Mammary epithelial cell (primary cell): ENCODE measurements at regions of chr20 and their contacts with region 1.

Region 1: GRCh38 chr20:62668441-62669027 is 26.2 kb downstream of the SLCO4A1 start:
- DNase-seq: peak; percentile 58
- H3K4me3 ChIP-seq: no peak overlapping the region
- H3K27ac ChIP-seq: no peak overlapping the region
- H3K4me1 ChIP-seq: peaks cover 24% of the 10 kb centered on the region
- H3K27me3 ChIP-seq: no peaks in the 10 kb centered on the region
- CTCF ChIP-seq: peak; percentile 82 to 89

Region 2: GRCh38 chr20:62595491-62595890 is 73.0 kb before region 1 on chr20:
- CTCF ChIA-PET with region 1: no interaction called
- dilution Hi-C with region 1: loop called (anchors 5 kb)
- in situ Hi-C with region 1: no loop called
- intact Hi-C with region 1: no loop called
- DNase-seq: peak; percentile 39
- H3K4me3 ChIP-seq: no peak overlapping the region
- H3K27ac ChIP-seq: no peak overlapping the region
- H3K4me1 ChIP-seq: peaks cover 19% of the 10 kb centered on the region
- H3K27me3 ChIP-seq: no peaks in the 10 kb centered on the region
- CTCF ChIP-seq: no peak

Region 3: GRCh38 chr20:62710886-62711493 is 42.5 kb after region 1 on chr20:
- CTCF ChIA-PET with region 1: no interaction called
- dilution Hi-C with region 1: loop called (anchors 5 kb)
- in situ Hi-C with region 1: no loop called
- intact Hi-C with region 1: no loop called
- DNase-seq: peak; percentile 21
- H3K4me3 ChIP-seq: no peak overlapping the region
- H3K27ac ChIP-seq: no peak overlapping the region
- H3K4me1 ChIP-seq: peaks cover 28% of the 10 kb centered on the region
- H3K27me3 ChIP-seq: peaks cover 4% of the 10 kb centered on the region
- CTCF ChIP-seq: no peak

Region 4: GRCh38 chr20:62739581-62740285 is 71.2 kb after region 1 on chr20:
- CTCF ChIA-PET with region 1: no interaction called
- dilution Hi-C with region 1: no loop called
- in situ Hi-C with region 1: no loop called
- intact Hi-C with region 1: no loop called
- DNase-seq: no peak
- H3K4me3 ChIP-seq: no peak overlapping the region
- H3K27ac ChIP-seq: no peak overlapping the region
- H3K4me1 ChIP-seq: peaks cover 52% of the 10 kb centered on the region
- H3K27me3 ChIP-seq: no peaks in the 10 kb centered on the region
- CTCF ChIP-seq: no peak

Region 5: DNA sequence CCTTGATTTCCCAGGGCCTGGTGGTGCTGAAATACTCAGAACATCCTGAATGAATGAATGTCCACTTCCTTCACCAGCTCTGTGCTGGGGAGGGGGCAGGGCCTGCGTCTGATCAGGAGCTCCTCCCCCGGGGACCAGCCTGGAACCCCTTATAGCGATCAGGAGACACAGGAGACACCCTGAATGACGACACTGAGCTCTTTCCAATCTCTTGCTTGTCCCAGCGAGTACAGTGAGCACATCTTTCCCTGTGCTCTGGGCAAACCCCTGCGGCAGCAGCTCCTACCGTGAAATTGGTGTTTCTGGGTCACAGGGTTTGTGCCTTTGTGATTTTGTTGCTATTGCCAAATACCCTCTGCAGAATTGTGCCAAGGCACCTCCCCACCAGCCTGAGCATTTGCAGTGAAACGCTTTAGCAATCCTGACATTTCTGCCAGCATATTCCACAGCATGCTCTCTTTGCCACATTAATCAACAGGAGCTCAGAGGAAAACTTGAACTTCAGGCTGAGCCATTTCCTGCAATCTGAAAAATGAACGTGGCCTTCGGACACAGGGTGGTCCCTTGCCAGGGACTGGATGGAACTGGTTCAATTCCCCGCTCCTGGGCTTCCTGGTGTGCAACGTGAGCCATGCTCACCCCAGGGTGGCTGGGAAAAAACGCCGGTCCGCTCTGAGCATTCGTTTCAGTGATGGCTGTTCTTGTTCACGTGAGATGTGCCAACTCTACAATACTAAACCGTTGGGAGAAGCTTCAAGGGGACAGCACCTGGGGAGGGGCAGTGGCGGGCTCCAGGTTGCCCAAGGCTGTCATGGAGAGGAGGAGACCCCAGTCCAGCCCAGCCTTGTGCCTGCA is 104.7 kb after region 1 on chr20:
- CTCF ChIA-PET with region 1: no interaction called
- dilution Hi-C with region 1: loop called (anchors 5 kb)
- in situ Hi-C with region 1: no loop called
- intact Hi-C with region 1: no loop called
- DNase-seq: peak; percentile 76
- H3K4me3 ChIP-seq: no peak overlapping the region
- H3K27ac ChIP-seq: no peak overlapping the region
- H3K4me1 ChIP-seq: peaks cover 37% of the 10 kb centered on the region
- H3K27me3 ChIP-seq: no peaks in the 10 kb centered on the region
- CTCF ChIP-seq: no peak

Region 6: GRCh38 chr20:62818592-62819493 is 150.3 kb after region 1 on chr20:
- CTCF ChIA-PET with region 1: no interaction called
- dilution Hi-C with region 1: loop called (anchors 5 kb)
- in situ Hi-C with region 1: no loop called
- intact Hi-C with region 1: no loop called
- DNase-seq: peak; percentile 52
- H3K4me3 ChIP-seq: no peak overlapping the region
- H3K27ac ChIP-seq: no peak overlapping the region
- H3K4me1 ChIP-seq: peaks cover 39% of the 10 kb centered on the region
- H3K27me3 ChIP-seq: peaks cover 7% of the 10 kb centered on the region
- CTCF ChIP-seq: no peak